Activated CD4-positive, alpha-beta T cell treated with anti-CD3 and anti-CD28 coated beads for 36 hours (primary cell): ENCODE measurements at regions of chr7 and their contacts with region 1.

Region 1: GRCh38 chr7:98202367-98203195 is 8.7 kb upstream of the BHLHA15 start:
- DNase-seq: peak; percentile 84
- ATAC-seq: peak; percentile 91
- H3K4me3 Mint-ChIP-seq: peak overlapping the region; percentile 46
- H3K27ac Mint-ChIP-seq: peak overlapping the region; percentile 88
- H3K4me1 Mint-ChIP-seq: peaks cover 55% of the 10 kb centered on the region
- H3K27me3 Mint-ChIP-seq: no peaks in the 10 kb centered on the region

Region 2: DNA sequence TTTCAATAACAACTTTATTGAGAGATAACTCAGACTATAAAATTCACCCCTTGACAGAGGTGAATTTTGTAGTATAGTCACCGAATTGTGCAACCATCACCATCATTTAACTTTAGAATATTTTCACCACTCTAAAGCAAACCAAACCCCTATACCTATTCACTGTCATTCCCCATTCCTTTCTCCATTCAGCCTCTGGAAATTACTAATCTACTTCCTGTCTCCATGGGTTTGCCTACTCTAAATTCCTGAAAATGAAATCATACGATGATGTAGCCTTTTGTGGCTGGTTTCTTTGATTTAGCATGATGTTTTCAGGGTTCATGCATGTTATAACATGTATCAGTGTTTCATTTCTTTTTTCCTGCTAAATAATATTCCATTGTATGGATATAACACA is 111.5 kb before region 1 on chr7:
- CTCF ChIA-PET with region 1: no interaction called
- POLR2A ChIA-PET with region 1: no interaction called
- intact Hi-C with region 1: no loop called
- DNase-seq: no peak
- ATAC-seq: no peak
- H3K4me3 Mint-ChIP-seq: no peak overlapping the region
- H3K27ac Mint-ChIP-seq: no peak overlapping the region
- H3K4me1 Mint-ChIP-seq: no peaks in the 10 kb centered on the region
- H3K27me3 Mint-ChIP-seq: peaks cover 10% of the 10 kb centered on the region

Region 3: DNA sequence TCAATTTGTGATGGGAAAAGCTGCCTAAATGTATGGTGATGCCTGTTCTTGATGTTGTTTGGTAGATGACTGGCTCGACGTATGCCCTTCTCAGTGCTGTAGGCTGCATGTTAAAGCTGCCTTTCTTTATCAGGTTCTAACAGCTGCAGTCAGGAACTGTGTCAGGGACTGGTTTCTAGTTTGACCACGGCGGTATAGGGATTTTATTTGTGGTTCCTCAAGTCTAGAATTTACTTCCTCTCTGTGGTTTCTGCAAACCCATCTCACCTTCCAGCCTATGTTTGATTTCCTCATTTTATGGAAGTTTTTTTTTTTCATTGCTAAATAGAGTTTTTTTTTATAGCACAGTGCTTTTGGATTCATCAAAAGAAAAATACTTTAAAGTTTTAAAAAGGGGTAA is 69.4 kb before region 1 on chr7:
- CTCF ChIA-PET with region 1: interaction called, 4 read pairs
- POLR2A ChIA-PET with region 1: no interaction called
- intact Hi-C with region 1: loop called (anchors 1 to 5 kb)
- DNase-seq: peak; percentile 19
- ATAC-seq: peak; percentile 54
- H3K4me3 Mint-ChIP-seq: no peak overlapping the region
- H3K27ac Mint-ChIP-seq: no peak overlapping the region
- H3K4me1 Mint-ChIP-seq: peaks cover 50% of the 10 kb centered on the region
- H3K27me3 Mint-ChIP-seq: no peaks in the 10 kb centered on the region